ENCODE measurements at regions of chr14 and their contacts with region 1.

Region 1: GRCh38 chr14:31026395-31027118 is 378 bp upstream of the STRN3 start:
- DNase-seq: peak; percentile 90
- H3K4me3 Mint-ChIP-seq: peak overlapping the region; percentile 99
- H3K27ac Mint-ChIP-seq: peak overlapping the region; percentile 96
- H3K4me1 Mint-ChIP-seq: peaks cover 55% of the 10 kb centered on the region
- H3K27me3 Mint-ChIP-seq: no peaks in the 10 kb centered on the region

Region 2: GRCh38 chr14:30558675-30559555 is 467.6 kb before region 1 on chr14 and contains the start of gene G2E3:
- intact Hi-C with region 1: loop called (anchors 5 kb)
- DNase-seq: peak; percentile 90
- H3K4me3 Mint-ChIP-seq: peak within 1 kb of the TSS; percentile 100
- H3K27ac Mint-ChIP-seq: peak within 1 kb of the TSS; percentile 99
- H3K4me1 Mint-ChIP-seq: peaks cover 33% of the 10 kb centered on the region
- H3K27me3 Mint-ChIP-seq: peaks cover 4% of the 10 kb centered on the region
- total RNA-seq, gene G2E3: 21.5 and 24.1 TPM in 2 replicates

Region 3: GRCh38 chr14:30994681-30995620 is 31.6 kb before region 1 on chr14:
- intact Hi-C with region 1: loop called (anchors 1 kb)
- DNase-seq: no peak
- H3K4me3 Mint-ChIP-seq: no peak overlapping the region
- H3K27ac Mint-ChIP-seq: peak overlapping the region; percentile 74
- H3K4me1 Mint-ChIP-seq: peaks cover 29% of the 10 kb centered on the region
- H3K27me3 Mint-ChIP-seq: no peaks in the 10 kb centered on the region

Region 4: DNA sequence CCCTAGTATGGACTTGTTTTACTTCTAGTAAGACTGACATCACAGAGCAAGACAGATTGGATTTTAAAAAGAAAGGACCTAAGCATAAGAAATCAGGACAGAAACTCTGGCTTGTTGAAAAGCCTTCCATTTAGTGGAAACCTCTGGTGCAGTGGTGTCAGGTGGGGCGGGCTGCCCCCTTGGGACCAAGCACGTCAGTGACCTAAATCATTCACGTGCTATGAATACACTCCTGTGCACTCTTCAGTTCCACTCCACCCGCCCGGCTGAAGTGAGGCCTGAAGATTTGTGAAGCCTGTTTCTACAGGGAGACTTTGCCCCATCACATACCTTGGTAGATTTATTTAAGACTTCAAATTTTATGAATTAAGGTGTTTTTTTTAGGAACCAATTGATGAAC is 57.8 kb after region 1 on chr14:
- intact Hi-C with region 1: loop called (anchors 2 kb)
- DNase-seq: no peak
- H3K4me3 Mint-ChIP-seq: no peak overlapping the region
- H3K27ac Mint-ChIP-seq: no peak overlapping the region
- H3K4me1 Mint-ChIP-seq: no peaks in the 10 kb centered on the region
- H3K27me3 Mint-ChIP-seq: no peaks in the 10 kb centered on the region

Region 5: DNA sequence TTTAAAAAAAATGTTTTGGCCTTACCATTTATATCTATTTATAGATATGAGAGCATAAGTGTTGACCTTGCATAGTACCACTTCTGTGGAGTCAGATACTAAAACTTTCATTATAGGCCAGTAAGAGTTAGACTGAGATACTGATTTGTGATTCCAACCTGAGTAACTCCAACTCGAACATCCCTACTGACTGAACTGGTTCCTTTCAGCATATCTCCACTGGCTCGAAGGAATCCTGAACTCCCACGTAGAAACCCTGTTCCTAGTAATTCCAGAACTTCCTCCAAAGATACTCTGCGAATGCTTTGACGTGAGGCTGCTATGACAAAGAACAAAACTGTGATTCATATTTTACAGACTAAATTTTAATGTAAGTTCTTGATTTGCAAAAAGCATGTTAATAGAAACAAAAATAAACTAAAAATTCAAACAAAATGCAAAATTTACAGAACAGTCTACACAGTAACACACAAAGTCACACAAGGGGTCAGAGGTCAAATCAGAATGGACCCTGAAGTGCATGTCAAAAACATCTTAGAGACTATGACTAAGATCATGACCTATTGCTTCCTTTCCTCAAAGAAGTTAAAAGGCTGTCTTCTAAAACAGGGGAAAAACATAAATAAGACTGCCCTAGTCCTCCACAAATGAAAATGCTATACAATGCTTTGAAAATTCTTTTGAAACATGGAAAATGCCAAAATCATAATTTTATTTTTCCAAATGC is 362.3 kb after region 1 on chr14:
- intact Hi-C with region 1: loop called (anchors 10 kb)
- DNase-seq: no peak
- H3K4me3 Mint-ChIP-seq: peak overlapping the region; percentile 7
- H3K27ac Mint-ChIP-seq: peak overlapping the region; percentile 93
- H3K4me1 Mint-ChIP-seq: peaks cover 41% of the 10 kb centered on the region
- H3K27me3 Mint-ChIP-seq: no peaks in the 10 kb centered on the region

Region 6: GRCh38 chr14:31456841-31457664 is 430.5 kb after region 1 on chr14 and contains the start of gene DTD2:
- intact Hi-C with region 1: loop called (anchors 1 kb)
- DNase-seq: peak; percentile 89
- H3K4me3 Mint-ChIP-seq: peak within 1 kb of the TSS; percentile 96
- H3K27ac Mint-ChIP-seq: peak within 1 kb of the TSS; percentile 95
- H3K4me1 Mint-ChIP-seq: peaks cover 43% of the 10 kb centered on the region
- H3K27me3 Mint-ChIP-seq: peaks cover 2% of the 10 kb centered on the region
- total RNA-seq, gene DTD2: 29.0 and 30.6 TPM in 2 replicates

Region 7: DNA sequence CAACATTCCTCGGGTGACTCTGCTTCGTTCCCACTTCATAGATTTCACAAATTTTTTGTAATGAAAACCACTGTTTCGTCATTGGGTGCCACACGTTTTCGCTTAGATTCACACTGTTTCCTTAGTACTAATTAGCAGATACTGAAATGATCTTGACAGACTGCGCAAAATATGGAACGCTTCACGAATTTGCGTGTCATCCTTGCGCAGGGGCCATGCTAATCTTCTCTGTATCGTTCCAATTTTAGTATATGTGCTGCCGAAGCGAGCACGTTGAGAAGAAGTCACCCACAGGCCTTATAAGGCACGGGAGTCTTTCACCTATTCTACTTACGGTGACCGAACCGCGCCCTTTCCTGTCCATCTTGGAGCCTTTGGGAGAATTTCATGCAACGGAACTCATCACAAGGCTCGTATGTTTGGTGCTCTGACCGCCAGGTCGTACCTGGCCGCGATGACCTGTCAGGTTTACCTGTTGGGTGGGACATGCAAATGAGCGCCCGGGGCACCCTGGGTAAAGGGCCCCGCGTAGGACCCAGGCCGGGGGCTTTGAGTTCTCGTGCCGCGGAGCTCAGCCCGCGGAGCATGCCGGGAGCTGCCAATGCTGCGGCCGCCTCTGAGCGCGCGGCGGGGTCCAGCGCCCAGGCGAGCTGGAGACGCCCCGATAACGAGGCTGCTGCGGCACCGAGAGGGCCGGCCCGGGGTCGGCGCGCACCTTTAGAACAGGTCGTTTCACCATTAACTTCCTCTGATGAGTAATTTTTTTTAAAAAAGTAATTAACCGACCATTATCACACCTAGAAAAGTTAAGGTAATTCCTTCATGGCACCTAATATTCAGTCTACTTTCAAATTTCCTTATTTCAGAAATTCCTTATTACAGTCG is 1176.7 kb after region 1 on chr14 and contains the start of gene RNU6-8:
- intact Hi-C with region 1: loop called (anchors 5 kb)
- DNase-seq: peak; percentile 78
- H3K4me3 Mint-ChIP-seq: peak within 1 kb of the TSS; percentile 87
- H3K27ac Mint-ChIP-seq: peak within 1 kb of the TSS; percentile 91
- H3K4me1 Mint-ChIP-seq: peaks cover 49% of the 10 kb centered on the region
- H3K27me3 Mint-ChIP-seq: peaks cover 2% of the 10 kb centered on the region
- total RNA-seq, gene RNU6-8: not detected in 2 replicates